GM10248 (cell line): ENCODE measurements at regions of chr2 and their contacts with region 1.

Region 1: DNA sequence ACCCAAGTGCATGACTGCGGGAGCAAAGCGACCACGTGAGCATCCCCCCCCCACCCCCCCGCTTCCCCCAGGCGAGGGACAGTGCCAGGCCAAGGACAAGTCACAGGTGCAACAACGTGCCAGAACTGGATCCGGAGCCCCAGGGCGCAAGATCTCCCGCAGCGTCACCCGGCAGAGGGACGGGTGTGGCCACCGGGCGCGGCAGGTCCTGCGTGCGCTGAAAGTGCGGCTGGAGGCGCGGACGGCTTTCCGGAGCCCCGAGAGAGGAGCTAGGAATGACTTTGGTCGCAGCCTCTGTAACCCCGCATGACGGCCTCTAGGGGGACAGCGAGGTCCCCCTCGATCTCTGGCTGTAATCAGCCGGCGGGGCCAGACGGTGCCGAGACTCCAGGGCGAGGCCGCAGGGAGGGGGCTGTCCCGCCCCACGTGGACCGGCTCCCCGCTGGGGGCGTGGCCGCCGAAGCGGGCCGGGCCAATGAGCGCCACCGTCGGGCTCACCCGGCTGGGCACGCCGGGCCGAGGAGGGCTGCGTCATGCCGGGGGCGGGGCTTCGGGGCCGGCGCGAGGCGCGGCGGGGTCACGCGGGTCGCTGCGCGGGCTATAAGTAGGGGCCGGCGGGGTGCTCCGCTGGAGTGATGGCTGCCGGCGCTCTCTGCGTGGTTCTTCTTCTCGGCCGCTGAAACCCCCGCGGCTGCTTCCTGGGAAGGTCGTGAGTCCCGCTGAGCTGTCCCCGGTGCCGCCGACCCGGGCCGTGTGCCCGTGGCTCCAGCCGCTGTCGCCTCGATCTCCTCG is at the start of gene SLC20A1:
- DNase-seq: peak; percentile 100
- CTCF ChIP-seq: peak; percentile 58

Region 2: DNA sequence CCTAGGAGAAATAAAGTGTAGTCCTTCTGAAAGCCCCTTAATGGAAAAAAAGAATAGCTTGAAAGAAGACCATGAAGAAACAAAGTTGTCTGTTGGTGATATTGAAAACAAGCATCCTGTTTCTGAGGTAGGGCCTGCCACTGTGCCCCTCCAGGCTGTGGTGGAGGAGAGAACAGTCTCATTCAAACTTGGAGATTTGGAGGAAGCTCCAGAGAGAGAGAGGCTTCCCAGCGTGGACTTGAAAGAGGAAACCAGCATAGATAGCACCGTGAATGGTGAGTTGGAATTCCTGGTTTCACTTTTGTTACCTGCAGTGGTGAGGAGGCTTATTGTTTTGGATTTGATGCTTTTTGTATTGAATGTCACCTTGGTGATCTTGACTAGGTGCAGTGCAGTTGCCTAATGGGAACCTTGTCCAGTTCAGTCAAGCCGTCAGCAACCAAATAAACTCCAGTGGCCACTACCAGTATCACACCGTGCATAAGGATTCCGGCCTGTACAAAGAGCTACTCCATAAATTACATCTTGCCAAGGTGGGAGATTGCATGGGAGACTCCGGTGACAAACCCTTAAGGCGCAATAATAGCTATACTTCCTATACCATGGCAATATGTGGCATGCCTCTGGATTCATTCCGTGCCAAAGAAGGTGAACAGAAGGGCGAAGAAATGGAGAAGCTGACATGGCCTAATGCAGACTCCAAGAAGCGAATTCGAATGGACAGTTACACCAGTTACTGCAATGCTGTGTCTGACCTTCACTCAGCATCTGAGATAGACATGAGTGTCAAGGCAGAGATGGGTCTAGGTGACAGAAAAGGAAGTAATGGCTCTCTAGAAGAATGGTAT is 13.5 kb after region 1 on chr2:
- CTCF ChIA-PET with region 1: interaction called, 10 read pairs
- POLR2A ChIA-PET with region 1: interaction called, 32 read pairs
- DNase-seq: no peak
- CTCF ChIP-seq: no peak

Region 3: GRCh38 chr2:112666764-112667122 is 21.2 kb after region 1 on chr2:
- CTCF ChIA-PET with region 1: interaction called, 8 read pairs
- POLR2A ChIA-PET with region 1: interaction called, 12 read pairs
- DNase-seq: no peak
- CTCF ChIP-seq: no peak